Common myeloid progenitor, CD34-positive (primary cell): ENCODE measurements at regions of chr1 and their contacts with region 1.

Region 1: DNA sequence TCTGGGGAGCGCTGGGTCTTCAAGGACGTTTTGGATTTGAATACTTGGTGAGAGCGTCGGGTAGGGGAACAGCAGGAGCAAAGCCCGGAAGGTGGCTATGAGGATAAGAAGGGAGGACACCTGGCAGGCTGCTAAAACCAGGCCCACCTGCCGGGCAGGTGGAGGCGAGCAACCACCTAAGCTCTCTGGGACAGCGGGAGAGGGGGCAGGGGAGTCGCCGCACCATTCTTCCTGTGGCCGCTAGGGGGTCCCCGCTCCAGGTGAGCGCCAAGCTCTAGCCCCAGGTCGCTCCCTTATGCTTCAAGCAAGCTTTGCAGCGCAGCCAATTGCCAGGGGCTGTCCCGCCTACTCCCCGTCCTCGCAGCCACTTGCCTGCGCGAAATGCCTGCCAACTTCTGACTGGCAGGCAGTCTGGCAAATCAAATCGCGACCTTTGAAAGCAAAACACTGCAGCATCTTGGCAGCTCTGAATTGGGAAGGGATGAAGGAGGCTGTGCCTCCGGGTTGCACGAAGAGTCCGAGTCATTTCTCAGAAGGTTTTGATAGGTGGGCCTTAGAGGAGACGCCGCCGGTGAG is at the start of gene NIPAL3:
- DNase-seq: peak; percentile 99 to 100 (median 100)
- H3K4me3 ChIP-seq: peak within 1 kb of the TSS; percentile 83 to 92 (median 86)
- H3K27ac ChIP-seq: peak within 1 kb of the TSS in 1 of 2 experiments; percentile 75
- H3K4me1 ChIP-seq: peaks cover 20 to 55% (median 46%) of the 10 kb centered on the region in 4 experiments
- H3K27me3 ChIP-seq: no peaks in the 10 kb centered on the region

Region 2: DNA sequence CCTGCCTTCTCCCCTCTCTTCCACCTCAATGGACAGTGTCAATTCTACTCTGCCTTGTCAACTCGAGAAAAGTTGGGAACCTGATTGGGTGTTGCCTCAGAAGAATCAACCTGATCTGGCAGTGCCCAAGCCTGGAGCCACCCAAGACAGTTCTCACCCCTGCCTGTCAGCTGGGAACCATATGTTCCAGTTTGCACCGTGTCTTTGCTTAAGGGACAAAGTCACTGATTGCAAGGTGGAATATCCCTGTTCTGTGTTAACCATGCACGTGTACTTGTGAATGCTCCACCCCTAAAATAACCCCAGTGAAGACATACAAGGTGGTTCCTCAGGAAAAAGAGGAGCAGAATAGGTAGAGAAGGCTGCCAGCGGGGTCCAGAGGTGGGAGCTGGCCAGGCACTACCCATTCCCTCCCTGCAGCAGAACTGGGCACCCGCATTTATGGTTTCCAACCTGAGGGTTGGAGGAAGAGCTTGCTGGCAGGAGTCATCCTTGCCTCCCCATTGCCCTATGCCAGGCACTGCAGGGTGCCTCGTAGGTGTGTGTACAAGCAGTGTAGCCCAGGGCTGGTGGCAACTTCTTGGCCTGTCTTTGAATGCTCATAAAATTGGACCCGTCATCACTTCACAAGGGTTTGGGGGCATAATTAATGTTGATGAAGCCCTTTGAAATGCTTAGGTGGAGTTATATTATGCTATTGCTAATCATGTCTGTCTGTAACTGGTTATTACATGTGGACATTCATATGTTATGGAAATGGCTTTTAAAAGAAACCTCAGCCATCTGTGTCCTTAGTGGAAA is 11.5 kb after region 1 on chr1:
- CTCF ChIA-PET with region 1: interaction called, 13 read pairs
- POLR2A ChIA-PET with region 1: no interaction called
- DNase-seq: no peak
- H3K4me3 ChIP-seq: no peak overlapping the region
- H3K27ac ChIP-seq: no peak overlapping the region
- H3K4me1 ChIP-seq: no peaks in the 10 kb centered on the region
- H3K27me3 ChIP-seq: no peaks in the 10 kb centered on the region